GM10248 (cell line): ENCODE measurements at regions of chr9 and their contacts with region 1.

Region 1: DNA sequence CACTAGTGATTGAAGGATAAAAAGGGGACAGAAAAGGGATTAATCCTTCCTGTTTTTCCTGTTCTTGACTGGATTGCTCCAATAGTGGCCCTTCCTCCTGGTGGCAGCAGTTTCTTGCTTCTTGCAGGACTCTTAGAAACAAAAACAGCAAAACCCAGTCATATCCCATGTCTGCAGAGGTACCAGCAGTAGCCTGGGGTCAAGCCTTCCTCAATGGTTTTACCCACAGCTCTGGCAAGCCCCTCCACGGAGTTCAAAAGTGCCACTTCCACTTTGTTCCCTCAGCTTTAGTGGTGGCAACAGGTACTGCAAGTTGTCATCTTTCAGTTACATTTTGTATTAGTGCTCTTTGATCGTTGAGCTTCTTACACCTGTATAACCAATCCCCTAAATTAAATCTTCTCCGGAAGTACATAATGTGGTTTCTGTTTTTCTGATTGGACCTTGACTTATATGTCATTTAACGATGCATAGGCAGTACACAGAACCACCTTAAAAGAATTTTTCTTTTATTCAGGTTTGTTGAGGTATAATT is 8.7 kb upstream of the RANBP6 start:
- DNase-seq: peak; percentile 41
- CTCF ChIP-seq: peak; percentile 17

Region 2: GRCh38 chr9:6008169-6008979 is 15.7 kb before region 1 on chr9:
- CTCF ChIA-PET with region 1: interaction called, 34 read pairs
- POLR2A ChIA-PET with region 1: no interaction called
- DNase-seq: peak; percentile 92
- CTCF ChIP-seq: no peak

Region 3: GRCh38 chr9:6034954-6035353 is 10.9 kb after region 1 on chr9:
- CTCF ChIA-PET with region 1: interaction called, 26 read pairs
- POLR2A ChIA-PET with region 1: no interaction called
- DNase-seq: no peak
- CTCF ChIP-seq: no peak

Region 4: DNA sequence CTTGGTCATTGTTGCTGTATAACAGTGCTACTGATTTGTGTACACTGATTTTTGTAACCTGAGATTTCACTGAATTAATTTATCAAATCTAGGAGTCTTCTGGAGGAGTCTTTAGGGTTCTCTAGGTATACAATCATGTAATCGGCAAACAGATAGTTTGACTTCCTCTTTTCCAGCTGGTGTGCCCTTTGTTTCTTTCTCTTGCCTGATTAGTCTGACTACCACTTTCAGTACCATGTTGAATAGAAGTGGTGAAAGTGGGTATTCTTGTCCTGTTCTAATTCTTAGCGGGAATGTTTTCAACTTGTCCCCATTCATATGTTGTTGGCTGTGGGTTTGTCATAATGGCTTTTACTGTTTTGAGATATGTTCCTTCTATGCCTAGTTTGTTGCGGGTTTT is 16.0 kb after region 1 on chr9:
- CTCF ChIA-PET with region 1: interaction called, 26 read pairs
- POLR2A ChIA-PET with region 1: no interaction called
- DNase-seq: no peak
- CTCF ChIP-seq: no peak

Region 5: GRCh38 chr9:6049798-6050197 is 25.7 kb after region 1 on chr9:
- CTCF ChIA-PET with region 1: interaction called, 22 read pairs
- POLR2A ChIA-PET with region 1: no interaction called
- DNase-seq: peak; percentile 41
- CTCF ChIP-seq: peak; percentile 42